Ascending aorta (tissue), 2 donors: ENCODE measurements at regions of chr1 and their contacts with region 1.

Region 1: GRCh38 chr1:85313888-85314696 is 37.7 kb upstream of the BCL10 start:
- DNase-seq: peak in 1 of 2 donors; percentile 87
- H3K4me3 ChIP-seq: no peak overlapping the region
- H3K27ac ChIP-seq: peak overlapping the region; percentile 87 to 92
- H3K4me1 ChIP-seq: peaks cover 3 to 27% of the 10 kb centered on the region in 2 donors
- H3K27me3 ChIP-seq: no peaks in the 10 kb centered on the region
- CTCF ChIP-seq: no peak

Region 2: GRCh38 chr1:85330711-85331290 is 16.7 kb after region 1 on chr1:
- intact Hi-C with region 1: loop called (anchors 1 kb)
- DNase-seq: peak in 1 of 2 donors; percentile 83
- H3K4me3 ChIP-seq: no peak overlapping the region
- H3K27ac ChIP-seq: peak overlapping the region; percentile 75 to 84
- H3K4me1 ChIP-seq: peaks cover 11 to 33% of the 10 kb centered on the region in 2 donors
- H3K27me3 ChIP-seq: no peaks in the 10 kb centered on the region
- CTCF ChIP-seq: no peak

Region 3: DNA sequence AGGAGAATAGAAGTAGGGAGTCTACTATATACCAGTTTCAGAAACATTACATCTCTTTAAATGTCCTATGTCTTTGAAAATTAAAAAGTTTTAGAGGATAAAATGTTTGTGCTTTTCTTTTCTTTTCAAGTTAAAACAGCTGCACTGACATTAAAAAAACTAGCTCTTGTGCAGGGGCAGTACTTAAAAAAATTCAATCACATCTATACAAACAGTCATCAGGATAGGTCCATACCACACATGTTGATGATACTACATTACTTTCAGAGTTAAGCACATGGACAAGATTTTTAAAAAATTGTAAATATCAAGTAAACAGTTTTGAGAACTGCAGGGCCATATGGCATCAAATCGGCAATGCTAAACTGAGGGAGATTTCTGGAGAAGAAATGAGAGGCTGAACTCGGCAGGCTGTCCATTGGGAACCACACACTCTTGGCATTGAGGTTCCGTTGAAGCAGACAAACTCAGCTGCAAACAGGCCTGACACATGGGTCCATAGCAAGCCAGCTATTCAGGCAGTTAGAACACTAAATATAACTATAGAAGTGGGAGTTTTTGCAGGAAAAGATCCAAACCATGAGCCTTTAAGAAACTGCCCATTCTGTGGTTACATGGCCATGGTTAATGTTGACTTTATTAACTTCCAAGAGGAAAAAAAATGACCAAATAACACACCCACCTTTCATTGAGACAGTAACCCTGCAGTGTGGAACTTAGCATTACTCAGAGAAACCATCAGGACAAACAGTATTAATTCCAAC is 46.8 kb after region 1 on chr1:
- intact Hi-C with region 1: loop called (anchors 5 kb)
- DNase-seq: no peak
- H3K4me3 ChIP-seq: no peak overlapping the region
- H3K27ac ChIP-seq: peak overlapping the region; percentile 41 to 50
- H3K4me1 ChIP-seq: peaks cover 0 to 7% of the 10 kb centered on the region in 2 donors
- H3K27me3 ChIP-seq: no peaks in the 10 kb centered on the region
- CTCF ChIP-seq: no peak